Breast epithelium (tissue), 4 donors: ENCODE measurements at regions of chr5 and their contacts with region 1.

Region 1: DNA sequence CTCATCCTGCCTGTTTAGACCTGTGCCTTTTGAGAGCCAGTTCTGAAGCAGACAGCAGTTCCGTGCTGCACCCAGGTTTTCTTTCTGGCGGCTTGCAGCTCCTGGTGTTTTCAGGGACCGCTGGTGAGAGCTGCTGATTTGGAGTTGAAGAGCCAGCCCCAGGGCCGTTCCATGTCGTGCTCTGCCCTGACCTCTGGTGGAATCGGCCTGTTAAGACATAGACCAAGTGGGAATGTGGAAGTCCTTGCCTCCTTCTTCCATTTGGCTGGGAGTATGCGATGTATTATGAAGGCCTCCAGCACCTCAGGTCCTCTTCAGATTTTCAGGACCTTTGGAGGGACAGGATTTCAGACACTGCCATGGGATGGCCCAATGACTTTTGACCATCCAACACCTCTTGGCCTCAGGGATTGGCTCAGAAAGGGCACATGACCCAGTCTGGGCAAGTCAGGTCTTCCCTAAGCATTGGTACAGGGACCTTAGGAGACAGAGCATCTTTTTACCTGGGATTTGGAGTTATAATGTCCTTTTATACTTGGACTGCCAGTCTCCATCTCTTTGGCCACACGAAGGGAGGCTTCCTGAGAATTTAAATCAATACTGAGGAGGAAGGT is 136.1 kb upstream of the CLINT1 start:
- DNase-seq: peak; percentile 45 to 62
- H3K4me3 ChIP-seq: no peak overlapping the region
- H3K27ac ChIP-seq: no peak overlapping the region
- H3K4me1 ChIP-seq: no peaks in the 10 kb centered on the region
- H3K27me3 ChIP-seq: no peaks in the 10 kb centered on the region
- CTCF ChIP-seq: peak; percentile 41 to 60 (median 57)
- POLR2A ChIP-seq: no peak

Region 2: DNA sequence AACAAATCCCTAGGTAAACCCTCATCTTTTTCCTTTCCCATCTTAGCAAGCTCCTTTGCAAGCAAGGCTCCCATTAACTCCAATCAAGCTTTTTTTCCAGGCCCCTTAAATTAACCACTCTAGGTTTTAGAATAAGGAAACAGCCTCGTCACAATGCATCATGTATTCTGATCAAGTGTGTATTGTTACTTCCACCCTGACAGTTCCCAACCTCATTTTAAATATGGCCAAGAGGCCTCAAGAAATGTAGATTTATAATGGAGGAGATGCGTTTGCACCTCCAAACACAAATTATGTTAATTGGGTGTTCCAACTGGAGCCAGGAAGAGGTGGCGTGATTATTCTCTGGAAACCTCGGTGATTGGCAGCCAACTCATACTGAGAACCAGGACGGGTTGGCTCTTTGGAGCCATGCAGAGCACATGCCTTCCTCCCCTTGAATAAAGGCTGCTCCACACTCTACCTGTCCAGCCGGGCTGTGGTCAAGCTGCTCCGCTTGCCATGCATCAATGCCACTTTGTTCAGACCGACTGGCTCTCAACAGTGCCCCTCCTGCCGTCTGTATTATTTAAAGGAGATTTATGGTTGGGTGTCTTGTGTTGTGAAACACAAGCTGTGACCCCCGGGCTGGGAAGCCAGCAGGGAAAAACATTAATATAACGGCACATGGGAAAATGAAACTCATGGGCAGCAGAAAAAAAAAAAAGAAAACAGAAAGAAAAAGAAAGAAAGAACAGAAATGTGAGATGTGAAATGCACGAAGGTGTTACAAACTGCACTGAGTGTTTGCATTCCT is 913.6 kb after region 1 on chr5:
- intact Hi-C with region 1: loop called (anchors 5 kb)
- DNase-seq: no peak
- H3K4me3 ChIP-seq: no peak overlapping the region
- H3K27ac ChIP-seq: no peak overlapping the region
- H3K4me1 ChIP-seq: peaks cover 0 to 5% of the 10 kb centered on the region in 2 donors
- H3K27me3 ChIP-seq: no peaks in the 10 kb centered on the region
- CTCF ChIP-seq: no peak
- POLR2A ChIP-seq: no peak